ENCODE measurements at regions of chr2 and their contacts with region 1.

Region 1: GRCh38 chr2:101655702-101656422 is 41.6 kb upstream of the MAP4K4 start:
- DNase-seq: no peak
- H3K4me3 Mint-ChIP-seq: no peak overlapping the region
- H3K27ac Mint-ChIP-seq: no peak overlapping the region
- H3K4me1 Mint-ChIP-seq: peaks cover 19% of the 10 kb centered on the region
- H3K27me3 Mint-ChIP-seq: no peaks in the 10 kb centered on the region

Region 2: GRCh38 chr2:101328474-101329007 is 327.3 kb before region 1 on chr2:
- CTCF ChIA-PET with region 1: no interaction called
- POLR2A ChIA-PET with region 1: no interaction called
- intact Hi-C with region 1: no loop called
- DNase-seq: peak; percentile 57
- H3K4me3 Mint-ChIP-seq: no peak overlapping the region
- H3K27ac Mint-ChIP-seq: no peak overlapping the region
- H3K4me1 Mint-ChIP-seq: peaks cover 38% of the 10 kb centered on the region
- H3K27me3 Mint-ChIP-seq: no peaks in the 10 kb centered on the region

Region 3: DNA sequence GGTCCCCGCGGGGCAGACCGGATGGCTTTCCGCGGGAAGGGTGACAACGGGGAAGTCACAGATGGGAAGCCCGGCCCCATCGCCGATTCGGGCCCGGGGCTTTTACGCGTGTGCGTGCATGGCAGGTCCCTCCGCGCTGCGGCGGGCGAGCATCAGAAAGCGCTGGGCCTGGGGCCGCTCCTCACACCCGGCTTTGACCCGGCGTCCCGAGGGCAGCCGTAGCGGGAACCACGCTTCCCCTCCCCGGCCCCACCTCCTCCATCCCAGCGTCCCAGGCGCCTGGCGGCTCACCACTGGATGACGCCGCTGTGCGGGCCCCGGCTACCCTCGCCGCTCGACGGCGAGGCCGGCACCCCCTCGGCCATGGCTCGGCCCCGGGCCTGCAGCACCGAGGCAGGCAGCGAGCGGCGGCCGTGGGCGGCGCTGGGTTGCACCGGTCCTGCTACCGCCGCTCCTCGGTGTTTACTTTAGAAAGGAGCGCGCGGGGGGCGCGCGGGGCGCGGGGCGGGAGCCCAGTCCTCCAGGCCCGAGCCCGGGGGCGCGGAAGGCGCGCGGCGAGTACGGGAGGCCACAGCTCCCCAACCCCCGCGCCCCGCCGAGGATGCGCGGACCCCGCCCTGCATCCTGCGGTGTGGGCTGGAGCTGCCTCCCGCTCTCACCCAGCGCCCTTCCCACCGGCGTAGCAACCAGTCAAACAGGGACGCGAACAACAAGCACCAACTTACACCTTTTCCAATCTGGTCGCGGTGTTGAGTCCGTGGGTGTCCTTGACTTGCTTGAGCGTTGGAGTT is 181.8 kb before region 1 on chr2:
- CTCF ChIA-PET with region 1: no interaction called
- POLR2A ChIA-PET with region 1: interaction called, 3 read pairs
- intact Hi-C with region 1: loop called (anchors 1 kb)
- DNase-seq: peak; percentile 65
- H3K4me3 Mint-ChIP-seq: peak overlapping the region; percentile 80
- H3K27ac Mint-ChIP-seq: peak overlapping the region; percentile 82
- H3K4me1 Mint-ChIP-seq: peaks cover 7% of the 10 kb centered on the region
- H3K27me3 Mint-ChIP-seq: peaks cover 2% of the 10 kb centered on the region

Region 4: DNA sequence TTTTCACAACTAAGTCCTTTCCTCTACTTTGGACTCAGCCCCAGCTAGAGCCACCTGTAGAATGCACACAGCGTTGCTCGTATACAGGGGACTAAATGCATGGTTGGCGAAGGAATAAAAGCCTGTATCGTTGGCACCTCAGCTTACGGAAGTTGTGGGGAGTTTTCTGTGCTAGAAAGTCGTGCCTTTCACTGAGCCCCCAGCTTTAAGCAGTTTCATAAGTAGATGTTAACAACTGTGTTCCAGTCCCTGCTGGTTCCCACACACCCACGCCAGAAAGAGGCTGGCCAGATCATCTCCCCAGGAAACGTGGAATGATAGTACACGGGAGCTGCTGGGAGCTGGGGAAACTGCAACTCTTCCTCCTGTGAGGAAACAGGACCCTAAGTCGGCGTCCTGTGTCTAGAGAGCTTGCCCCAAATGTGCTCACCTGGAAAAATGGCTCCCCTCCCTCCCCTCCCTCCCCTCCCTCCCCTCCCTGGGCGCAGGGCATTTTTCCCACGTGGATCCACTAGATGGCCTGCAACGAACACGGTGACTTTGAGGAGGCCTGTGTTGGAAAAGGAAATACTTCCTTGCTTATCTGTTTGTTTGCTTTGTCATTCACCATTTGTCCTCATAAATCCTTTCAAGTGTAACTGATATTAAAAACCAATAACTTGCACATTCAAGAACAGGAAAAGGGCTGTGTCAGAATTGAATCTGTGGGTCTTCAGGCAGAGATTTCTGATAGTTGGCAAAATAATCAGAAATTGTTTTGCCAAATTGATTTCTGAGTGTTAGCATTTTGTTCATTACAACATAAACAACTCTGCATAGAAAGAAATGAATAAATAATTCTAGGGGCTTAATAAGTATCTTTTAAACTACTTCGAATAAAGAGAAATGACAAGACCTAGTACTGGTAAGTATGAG is 137.0 kb before region 1 on chr2:
- CTCF ChIA-PET with region 1: no interaction called
- POLR2A ChIA-PET with region 1: no interaction called
- intact Hi-C with region 1: loop called (anchors 10 kb)
- DNase-seq: no peak
- H3K4me3 Mint-ChIP-seq: no peak overlapping the region
- H3K27ac Mint-ChIP-seq: no peak overlapping the region
- H3K4me1 Mint-ChIP-seq: peaks cover 28% of the 10 kb centered on the region
- H3K27me3 Mint-ChIP-seq: no peaks in the 10 kb centered on the region

Region 5: DNA sequence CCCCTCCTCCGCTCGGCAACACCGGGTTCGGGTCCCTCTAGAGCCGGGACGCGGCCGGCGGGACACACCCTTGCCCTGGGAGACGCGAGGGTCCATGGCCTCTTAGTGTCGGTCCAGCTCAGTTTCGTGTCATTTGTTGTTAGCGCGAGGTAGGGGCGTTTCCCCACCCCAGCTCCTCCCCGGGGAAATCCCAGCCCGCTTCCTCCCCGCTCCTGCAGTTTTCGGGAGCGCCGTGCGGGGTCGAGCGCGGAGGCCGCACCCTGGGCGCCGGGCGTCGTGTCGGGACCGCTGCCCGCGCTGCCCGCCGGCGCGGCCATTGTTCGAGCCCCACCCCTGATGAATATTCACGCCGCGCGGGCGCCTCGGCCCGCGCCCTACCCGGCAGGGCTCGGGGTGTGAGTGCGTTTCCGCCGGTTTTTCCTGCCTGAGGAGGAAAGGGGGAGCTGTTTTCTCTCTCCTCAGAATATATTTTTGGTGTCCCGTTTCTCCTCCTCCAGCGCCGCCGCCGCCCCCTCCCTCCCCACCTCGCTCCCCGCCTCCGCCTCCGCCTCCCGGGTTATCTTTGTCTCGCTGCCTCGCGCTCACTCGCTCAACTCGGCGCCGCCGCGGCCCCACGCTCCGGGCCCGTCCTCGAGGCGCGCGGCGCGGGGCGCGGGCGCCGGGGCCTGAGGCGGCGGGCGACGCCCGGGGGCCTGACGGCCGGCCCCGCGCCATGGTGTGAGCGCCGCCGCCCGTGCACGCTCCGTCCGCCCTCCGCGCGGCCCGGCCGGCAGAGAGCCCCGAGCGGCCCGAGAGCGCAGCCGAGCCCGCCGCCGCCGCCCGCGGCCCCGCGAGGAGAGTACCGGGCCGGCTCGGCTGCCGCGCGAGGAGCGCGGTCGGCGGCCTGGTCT is 41.5 kb after region 1 on chr2 and contains the start of gene MAP4K4:
- CTCF ChIA-PET with region 1: no interaction called
- POLR2A ChIA-PET with region 1: no interaction called
- intact Hi-C with region 1: loop called (anchors 2 kb)
- DNase-seq: peak; percentile 80
- H3K4me3 Mint-ChIP-seq: peak within 1 kb of the TSS; percentile 79
- H3K27ac Mint-ChIP-seq: peak within 1 kb of the TSS; percentile 78
- H3K4me1 Mint-ChIP-seq: peaks cover 26% of the 10 kb centered on the region
- H3K27me3 Mint-ChIP-seq: no peaks in the 10 kb centered on the region
- total RNA-seq, gene MAP4K4: 42.1 to 43.4 TPM

Region 6: DNA sequence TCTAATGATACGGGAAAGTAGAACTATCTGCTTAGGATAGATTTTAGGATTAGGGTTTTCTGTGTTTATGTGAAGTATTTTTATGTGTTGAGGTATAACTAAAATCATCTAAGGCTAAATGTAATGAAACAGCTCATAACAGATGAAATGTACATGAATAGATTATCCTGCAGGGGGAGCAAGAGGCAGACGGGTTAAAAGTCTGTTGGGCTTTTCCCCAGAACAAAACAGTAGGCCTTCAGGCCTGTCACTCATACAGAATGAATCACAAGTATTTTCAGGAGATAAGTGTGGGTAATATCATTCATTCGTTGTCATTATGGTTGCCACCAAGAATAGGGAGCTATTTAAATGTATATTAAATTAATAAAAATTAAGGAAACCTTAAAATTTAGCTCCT is 228.0 kb after region 1 on chr2:
- CTCF ChIA-PET with region 1: no interaction called
- POLR2A ChIA-PET with region 1: no interaction called
- intact Hi-C with region 1: no loop called
- DNase-seq: peak; percentile 60
- H3K4me3 Mint-ChIP-seq: no peak overlapping the region
- H3K27ac Mint-ChIP-seq: peak overlapping the region; percentile 2
- H3K4me1 Mint-ChIP-seq: peaks cover 21% of the 10 kb centered on the region
- H3K27me3 Mint-ChIP-seq: no peaks in the 10 kb centered on the region

Region 7: DNA sequence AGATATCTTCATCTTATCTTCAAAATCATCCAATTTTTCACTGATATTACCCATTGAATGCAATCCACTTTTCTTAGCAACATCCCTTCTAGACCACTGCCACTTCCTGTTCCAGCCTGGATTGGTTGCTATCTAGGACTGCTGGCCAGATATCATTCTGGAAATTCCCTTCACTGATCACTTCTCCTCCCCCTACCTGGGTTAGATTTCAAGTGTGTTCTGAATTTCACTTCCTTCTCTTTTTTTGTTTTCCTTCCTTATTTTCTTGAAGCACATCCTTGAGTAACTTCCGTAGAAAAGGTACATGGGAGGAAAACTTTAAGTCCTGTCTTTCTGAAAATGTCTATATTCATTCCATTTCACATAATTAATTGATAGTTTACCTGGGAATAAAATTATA is 253.9 kb after region 1 on chr2:
- CTCF ChIA-PET with region 1: no interaction called
- POLR2A ChIA-PET with region 1: no interaction called
- intact Hi-C with region 1: no loop called
- DNase-seq: no peak
- H3K4me3 Mint-ChIP-seq: no peak overlapping the region
- H3K27ac Mint-ChIP-seq: no peak overlapping the region
- H3K4me1 Mint-ChIP-seq: peaks cover 11% of the 10 kb centered on the region
- H3K27me3 Mint-ChIP-seq: peaks cover 22% of the 10 kb centered on the region